ENCODE measurements at regions of chr11 and their contacts with region 1.

Region 1: DNA sequence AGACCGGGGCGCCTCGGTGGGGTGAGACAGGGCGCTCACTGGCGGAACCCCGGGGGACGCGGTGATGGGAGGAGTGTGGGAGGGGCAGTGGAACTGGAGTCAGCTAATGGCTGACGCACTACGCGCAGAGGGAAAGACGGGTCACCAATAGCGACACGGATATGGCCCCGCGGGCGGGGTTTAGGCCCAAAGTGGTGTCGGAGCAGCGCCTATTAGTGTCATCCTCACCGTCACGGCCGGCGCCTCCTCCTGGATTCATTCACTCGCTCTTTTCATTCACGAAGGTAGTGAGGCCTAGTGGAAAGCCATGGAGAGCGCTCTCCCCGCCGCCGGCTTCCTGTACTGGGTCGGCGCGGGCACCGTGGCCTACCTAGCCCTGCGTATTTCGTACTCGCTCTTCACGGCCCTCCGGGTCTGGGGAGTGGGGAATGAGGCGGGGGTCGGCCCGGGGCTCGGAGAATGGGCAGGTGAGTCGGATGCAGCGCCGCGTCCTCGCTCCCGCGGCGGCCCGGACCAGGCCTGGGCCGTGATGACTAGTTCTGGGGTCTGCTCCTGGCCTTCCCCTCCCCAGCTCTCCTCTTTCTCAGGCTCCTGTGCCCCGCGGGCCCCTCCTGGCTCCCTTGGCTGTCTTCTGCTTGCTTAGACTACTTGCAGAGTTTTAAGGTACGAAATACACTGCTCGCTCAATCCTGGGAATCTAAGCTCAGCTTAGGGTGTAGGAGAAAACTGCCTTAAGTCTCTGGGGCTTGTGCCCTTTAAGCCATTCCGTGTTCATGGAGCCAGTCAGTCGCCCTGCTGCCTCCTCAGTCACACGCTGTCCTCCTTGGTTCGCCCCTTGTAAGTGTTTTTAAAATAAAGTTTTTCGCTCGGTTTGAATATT is at the start of gene HSD17B12:
- DNase-seq: peak; percentile 97
- ATAC-seq: peak; percentile 96
- H3K4me3 ChIP-seq: peak within 1 kb of the TSS; percentile 72
- H3K27ac ChIP-seq: peak within 1 kb of the TSS; percentile 93
- H3K4me1 ChIP-seq: peaks cover 4% of the 10 kb centered on the region; the same call in 1 of the 2 replicates
- H3K27me3 ChIP-seq: no peaks in the 10 kb centered on the region
- CTCF ChIP-seq: no peak
- EP300 ChIP-seq: no peak
- POLR2A ChIP-seq: peak; percentile 97
- RAD21 ChIP-seq: no peak
- polyA plus RNA-seq, gene HSD17B12: 23.6 to 33.6 TPM

Region 2: GRCh38 chr11:43072096-43072495 is 608.7 kb before region 1 on chr11:
- CTCF ChIA-PET with region 1: no interaction called
- POLR2A ChIA-PET with region 1: no interaction called
- RAD21 ChIA-PET with region 1: no interaction called
- SMC1A ChIA-PET with region 1: no interaction called
- in situ Hi-C with region 1: no loop called
- intact Hi-C with region 1: no loop called
- DNase-seq: no peak
- ATAC-seq: no peak
- H3K4me3 ChIP-seq: no peak overlapping the region
- H3K27ac ChIP-seq: no peak overlapping the region
- H3K4me1 ChIP-seq: no peaks in the 10 kb centered on the region
- H3K27me3 ChIP-seq: no peaks in the 10 kb centered on the region
- CTCF ChIP-seq: no peak
- EP300 ChIP-seq: no peak
- POLR2A ChIP-seq: no peak
- RAD21 ChIP-seq: no peak

Region 3: GRCh38 chr11:43367382-43368178 is 313.2 kb before region 1 on chr11:
- CTCF ChIA-PET with region 1: no interaction called
- POLR2A ChIA-PET with region 1: no interaction called
- RAD21 ChIA-PET with region 1: no interaction called
- SMC1A ChIA-PET with region 1: no interaction called
- in situ Hi-C with region 1: loop called (anchors 10 kb)
- intact Hi-C with region 1: no loop called
- DNase-seq: peak; percentile 20
- ATAC-seq: peak; percentile 74
- H3K4me3 ChIP-seq: no peak overlapping the region
- H3K27ac ChIP-seq: peak overlapping the region; percentile 66
- H3K4me1 ChIP-seq: peaks cover 20% of the 10 kb centered on the region
- H3K27me3 ChIP-seq: no peaks in the 10 kb centered on the region
- CTCF ChIP-seq: no peak
- EP300 ChIP-seq: peak in 1 of 2 experiments; percentile 51; a peak in 1 of 4 replicates
- POLR2A ChIP-seq: no peak
- RAD21 ChIP-seq: no peak

Region 4: GRCh38 chr11:43643898-43644620 is 36.7 kb before region 1 on chr11:
- CTCF ChIA-PET with region 1: no interaction called
- POLR2A ChIA-PET with region 1: interaction called, 5 read pairs
- RAD21 ChIA-PET with region 1: interaction called, 3 read pairs
- SMC1A ChIA-PET with region 1: interaction called, 3 read pairs
- in situ Hi-C with region 1: no loop called
- intact Hi-C with region 1: loop called (anchors 2 kb)
- DNase-seq: peak; percentile 45
- ATAC-seq: peak; percentile 100
- H3K4me3 ChIP-seq: peak overlapping the region; percentile 93
- H3K27ac ChIP-seq: peak overlapping the region; percentile 67
- H3K4me1 ChIP-seq: no peaks in the 10 kb centered on the region; the same call in 1 of the 2 replicates
- H3K27me3 ChIP-seq: no peaks in the 10 kb centered on the region
- CTCF ChIP-seq: no peak
- EP300 ChIP-seq: peak in 1 of 2 experiments; percentile 26; a peak in 1 of 4 replicates
- POLR2A ChIP-seq: peak; percentile 81
- RAD21 ChIP-seq: no peak

Region 5: GRCh38 chr11:44565211-44565952 is 884.6 kb after region 1 on chr11 and contains the start of gene CD82:
- CTCF ChIA-PET with region 1: no interaction called
- POLR2A ChIA-PET with region 1: no interaction called
- RAD21 ChIA-PET with region 1: no interaction called
- SMC1A ChIA-PET with region 1: no interaction called
- in situ Hi-C with region 1: no loop called
- intact Hi-C with region 1: loop called (anchors 10 kb)
- DNase-seq: peak; percentile 84
- ATAC-seq: peak; percentile 84
- H3K4me3 ChIP-seq: peak within 1 kb of the TSS; percentile 89
- H3K27ac ChIP-seq: peak within 1 kb of the TSS; percentile 83
- H3K4me1 ChIP-seq: peaks cover 38% of the 10 kb centered on the region
- H3K27me3 ChIP-seq: no peaks in the 10 kb centered on the region
- CTCF ChIP-seq: peak in 2 of 3 experiments; percentile 17 to 32; a peak in 2 of 6 replicates
- EP300 ChIP-seq: no peak
- POLR2A ChIP-seq: peak; percentile 96
- RAD21 ChIP-seq: no peak
- polyA plus RNA-seq, gene CD82: 5.2 to 8.2 TPM